ENCODE measurements at regions of chr20 and their contacts with region 1.

Region 1: DNA sequence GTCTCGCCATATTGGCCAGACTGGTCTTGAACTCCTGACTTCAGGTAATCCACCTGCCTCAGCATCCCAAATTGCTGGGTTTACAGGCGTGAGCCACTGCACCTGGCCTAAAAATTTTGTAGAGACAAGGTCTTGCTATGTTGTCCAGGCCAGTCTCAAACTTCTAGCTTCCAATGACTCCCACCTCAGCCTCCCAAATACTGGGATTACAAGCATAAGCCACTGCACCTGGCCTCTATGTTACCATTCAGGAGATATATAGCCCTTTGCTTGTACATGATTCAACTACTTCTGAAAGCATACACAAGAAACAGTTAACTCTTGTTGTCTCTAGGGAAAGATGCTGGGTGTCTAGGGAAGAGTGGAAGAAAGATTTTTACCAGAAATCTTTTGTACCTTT is 19.0 kb upstream of the NCOA3 start:
- DNase-seq: no peak
- H3K4me3 ChIP-seq: no peak overlapping the region
- H3K27me3 ChIP-seq: peaks cover 1% of the 10 kb centered on the region; the same call in 1 of the 2 replicates
- CTCF ChIP-seq: no peak

Region 2: GRCh38 chr20:47561180-47561579 is 78.5 kb after region 1 on chr20:
- CTCF ChIA-PET with region 1: no interaction called
- POLR2A ChIA-PET with region 1: interaction called, 22 read pairs
- DNase-seq: no peak
- H3K4me3 ChIP-seq: no peak overlapping the region
- H3K27me3 ChIP-seq: no peaks in the 10 kb centered on the region
- CTCF ChIP-seq: no peak

Measured in BJ (cell line).